ENCODE measurements at regions of chr19 and their contacts with region 1.

Region 1: GRCh38 chr19:17052439-17053210 is 22.6 kb downstream of the HAUS8 start:
- DNase-seq: peak in 1 of 2 experiments; percentile 55
- H3K4me3 ChIP-seq: no peak overlapping the region
- H3K4me3 Mint-ChIP-seq: no peak overlapping the region
- H3K27ac Mint-ChIP-seq: no peak overlapping the region
- H3K4me1 ChIP-seq: no peaks in the 10 kb centered on the region
- H3K4me1 Mint-ChIP-seq: no peaks in the 10 kb centered on the region
- H3K27me3 ChIP-seq: no peaks in the 10 kb centered on the region
- H3K27me3 Mint-ChIP-seq: no peaks in the 10 kb centered on the region
- CTCF ChIP-seq: peak; percentile 65 to 70

Region 2: DNA sequence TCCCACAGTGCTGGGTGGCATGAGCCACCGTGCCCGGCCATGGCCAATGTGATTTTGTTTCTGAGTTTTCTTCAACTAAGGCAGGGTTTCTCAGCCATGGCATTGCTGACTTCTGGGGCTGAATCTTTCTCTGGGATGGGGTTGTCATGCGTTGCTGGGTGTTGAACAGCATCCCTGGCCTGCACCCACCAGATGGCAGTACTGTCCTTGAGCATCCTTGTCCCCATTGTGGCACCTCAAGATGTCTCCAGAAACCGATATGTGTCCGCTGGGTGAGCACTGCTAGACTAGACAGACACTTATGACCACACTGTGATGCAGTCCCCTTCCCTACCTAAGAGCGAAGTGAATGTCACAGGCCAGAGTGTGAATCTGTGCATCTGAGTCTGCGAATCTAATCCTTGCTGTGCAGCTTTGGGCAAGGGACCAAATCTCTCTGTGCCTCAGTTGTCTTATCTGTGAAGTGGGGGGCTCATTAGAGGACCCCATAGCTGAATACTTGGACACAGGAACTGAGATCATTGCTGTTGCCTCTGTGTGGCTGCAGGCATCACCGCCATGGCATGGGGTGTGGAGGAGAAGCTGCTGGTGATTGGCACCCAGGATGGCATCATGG is 273.7 kb before region 1 on chr19:
- CTCF ChIA-PET with region 1: interaction called, 3 read pairs
- POLR2A ChIA-PET with region 1: no interaction called
- intact Hi-C with region 1: loop called (anchors 1 kb)
- DNase-seq: peak; percentile 63 to 67
- H3K4me3 ChIP-seq: no peak overlapping the region
- H3K4me3 Mint-ChIP-seq: no peak overlapping the region
- H3K27ac Mint-ChIP-seq: no peak overlapping the region
- H3K4me1 ChIP-seq: no peaks in the 10 kb centered on the region
- H3K4me1 Mint-ChIP-seq: no peaks in the 10 kb centered on the region
- H3K27me3 ChIP-seq: no peaks in the 10 kb centered on the region
- H3K27me3 Mint-ChIP-seq: peaks cover 9% of the 10 kb centered on the region
- CTCF ChIP-seq: peak; percentile 56

Measured in Caco-2 (cell line).